CD4-positive, alpha-beta memory T cell (primary cell): ENCODE measurements at regions of chr11 and their contacts with region 1.

Region 1: DNA sequence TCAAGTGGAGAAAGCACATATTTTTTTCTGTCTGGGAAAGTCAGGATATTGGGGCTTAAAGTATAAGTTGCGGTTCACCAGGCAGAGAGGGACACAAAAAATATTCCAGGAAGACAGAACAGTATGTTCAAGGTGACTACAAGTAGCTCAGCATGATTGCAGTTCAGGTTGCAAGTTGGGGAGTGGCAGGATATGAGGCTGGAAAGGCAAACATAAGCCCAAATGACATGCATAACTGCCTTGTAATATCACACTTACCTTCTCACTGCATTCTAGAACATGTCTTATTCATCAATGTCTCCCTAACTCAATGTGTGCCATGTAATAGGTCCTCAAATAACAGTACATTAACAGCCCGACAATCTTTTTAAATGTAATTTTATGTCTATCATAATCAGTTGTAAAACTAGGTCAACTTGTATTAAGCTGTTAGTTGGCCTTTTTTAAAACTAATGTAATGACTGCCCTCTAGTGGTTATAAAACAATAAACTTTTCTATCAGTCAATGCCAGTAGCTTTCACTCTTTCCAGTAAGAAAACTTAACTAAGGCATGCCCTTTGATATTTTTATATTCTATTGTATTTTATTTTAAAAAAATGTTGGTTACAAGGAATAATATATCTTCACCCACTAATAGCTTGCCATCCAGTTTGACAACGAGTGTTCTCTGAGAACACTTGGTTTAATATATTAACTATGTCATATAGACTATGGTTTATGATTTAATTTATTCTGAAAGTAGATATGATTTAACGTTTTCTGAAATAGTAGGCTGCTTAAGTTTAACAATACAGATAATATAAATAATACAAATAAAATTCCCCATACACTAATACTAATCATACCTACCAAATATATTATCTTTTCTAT is 39.4 kb upstream of the CFAP300 start:
- DNase-seq: peak in 4 of 5 donors; percentile 34 to 48 (median 38)
- H3K4me3 ChIP-seq: no peak overlapping the region
- H3K4me3 Mint-ChIP-seq: no peak overlapping the region
- H3K27ac ChIP-seq: no peak overlapping the region
- H3K27ac Mint-ChIP-seq: no peak overlapping the region
- H3K4me1 ChIP-seq: peaks cover 4% of the 10 kb centered on the region
- H3K4me1 Mint-ChIP-seq: peaks cover 2 to 7% (median 5%) of the 10 kb centered on the region in 4 donors
- H3K27me3 ChIP-seq: peaks cover 5% of the 10 kb centered on the region
- H3K27me3 Mint-ChIP-seq: peaks cover 0 to 9% of the 10 kb centered on the region in 2 donors

Region 2: GRCh38 chr11:101860696-101861427 is 146.9 kb before region 1 on chr11:
- CTCF ChIA-PET with region 1: interaction called, 123 read pairs
- POLR2A ChIA-PET with region 1: no interaction called
- intact Hi-C with region 1: loop called (anchors 1 kb)
- DNase-seq: peak in 4 of 5 donors; percentile 12 to 35 (median 25)
- H3K4me3 ChIP-seq: no peak overlapping the region
- H3K4me3 Mint-ChIP-seq: no peak overlapping the region
- H3K27ac ChIP-seq: no peak overlapping the region
- H3K27ac Mint-ChIP-seq: peak overlapping the region in 1 of 7 donors; percentile 7
- H3K4me1 ChIP-seq: no peaks in the 10 kb centered on the region
- H3K4me1 Mint-ChIP-seq: peaks cover 0 to 2% (median 0%) of the 10 kb centered on the region in 4 donors
- H3K27me3 ChIP-seq: no peaks in the 10 kb centered on the region
- H3K27me3 Mint-ChIP-seq: peaks cover 7 to 9% of the 10 kb centered on the region in 2 donors

Region 3: DNA sequence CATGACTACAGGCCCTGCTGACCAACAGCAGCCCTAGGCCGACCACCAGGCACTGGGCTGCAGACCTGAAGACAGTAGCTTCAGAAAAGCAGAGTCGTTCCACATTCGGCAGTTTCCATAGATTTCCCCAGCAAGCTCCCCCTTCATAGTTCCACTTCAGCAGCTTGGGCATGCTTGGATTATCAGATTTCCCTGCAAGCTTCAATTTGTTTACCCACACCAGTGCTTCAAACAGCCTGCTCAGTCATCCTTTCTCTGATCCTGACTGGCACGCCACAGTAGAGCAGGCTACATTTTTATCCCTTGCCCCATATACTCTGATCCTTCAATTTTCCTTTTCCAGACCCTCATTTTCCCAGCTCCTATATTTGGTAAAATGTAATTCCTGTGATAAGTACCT is 11.7 kb before region 1 on chr11:
- CTCF ChIA-PET with region 1: interaction called, 23 read pairs
- POLR2A ChIA-PET with region 1: no interaction called
- intact Hi-C with region 1: no loop called
- DNase-seq: no peak
- H3K4me3 ChIP-seq: no peak overlapping the region
- H3K4me3 Mint-ChIP-seq: no peak overlapping the region
- H3K27ac ChIP-seq: no peak overlapping the region
- H3K27ac Mint-ChIP-seq: no peak overlapping the region
- H3K4me1 ChIP-seq: no peaks in the 10 kb centered on the region
- H3K4me1 Mint-ChIP-seq: no peaks in the 10 kb centered on the region
- H3K27me3 ChIP-seq: no peaks in the 10 kb centered on the region
- H3K27me3 Mint-ChIP-seq: no peaks in the 10 kb centered on the region

Region 4: GRCh38 chr11:102026212-102026611 is 18.4 kb after region 1 on chr11:
- CTCF ChIA-PET with region 1: interaction called, 11 read pairs
- POLR2A ChIA-PET with region 1: no interaction called
- intact Hi-C with region 1: no loop called
- DNase-seq: no peak
- H3K4me3 ChIP-seq: no peak overlapping the region
- H3K4me3 Mint-ChIP-seq: no peak overlapping the region
- H3K27ac ChIP-seq: no peak overlapping the region
- H3K27ac Mint-ChIP-seq: no peak overlapping the region
- H3K4me1 ChIP-seq: no peaks in the 10 kb centered on the region
- H3K4me1 Mint-ChIP-seq: no peaks in the 10 kb centered on the region
- H3K27me3 ChIP-seq: no peaks in the 10 kb centered on the region
- H3K27me3 Mint-ChIP-seq: peaks cover 7 to 22% of the 10 kb centered on the region in 2 donors

Region 5: GRCh38 chr11:102097186-102097585 is 89.4 kb after region 1 on chr11:
- CTCF ChIA-PET with region 1: no interaction called
- POLR2A ChIA-PET with region 1: no interaction called
- intact Hi-C with region 1: no loop called
- DNase-seq: no peak
- H3K4me3 ChIP-seq: no peak overlapping the region
- H3K4me3 Mint-ChIP-seq: no peak overlapping the region
- H3K27ac ChIP-seq: no peak overlapping the region
- H3K27ac Mint-ChIP-seq: no peak overlapping the region
- H3K4me1 ChIP-seq: no peaks in the 10 kb centered on the region
- H3K4me1 Mint-ChIP-seq: no peaks in the 10 kb centered on the region
- H3K27me3 ChIP-seq: no peaks in the 10 kb centered on the region
- H3K27me3 Mint-ChIP-seq: peaks cover 0 to 3% of the 10 kb centered on the region in 2 donors